Left colon (tissue), 2 donors: ENCODE measurements at regions of chr6 and their contacts with region 1.

Region 1: GRCh38 chr6:52399511-52400312 is 20.4 kb upstream of the EFHC1 start:
- DNase-seq: peak in 1 of 2 donors; percentile 39
- ATAC-seq: peak; percentile 53

Region 2: GRCh38 chr6:52284460-52285176 is 115.1 kb before region 1 on chr6 and contains the start of gene MCM3:
- intact Hi-C with region 1: loop called in 1 of 2 experiments (anchors 5 kb)
- DNase-seq: peak; percentile 96 to 98
- ATAC-seq: peak; percentile 95
- total RNA-seq, gene MCM3: 22.5 to 33.2 TPM